PC-3 (cell line): ENCODE measurements at regions of chr18 and their contacts with region 1.

Region 1: GRCh38 chr18:26621161-26622026 is 73.0 kb upstream of the KCTD1 start:
- DNase-seq: peak; percentile 79
- ATAC-seq: peak; percentile 83
- H3K4me3 ChIP-seq: peak overlapping the region; percentile 67
- H3K27ac ChIP-seq: no peak overlapping the region
- H3K4me1 ChIP-seq: peaks cover 19% of the 10 kb centered on the region
- H3K27me3 ChIP-seq: no peaks in the 10 kb centered on the region
- CTCF ChIP-seq: peak; percentile 83

Region 2: GRCh38 chr18:26405190-26405801 is 216.1 kb before region 1 on chr18:
- CTCF ChIA-PET with region 1: interaction called, 12 read pairs
- POLR2A ChIA-PET with region 1: no interaction called
- intact Hi-C with region 1: loop called (anchors 10 kb)
- DNase-seq: peak; percentile 62
- ATAC-seq: peak; percentile 96
- H3K4me3 ChIP-seq: no peak overlapping the region
- H3K27ac ChIP-seq: no peak overlapping the region
- H3K4me1 ChIP-seq: no peaks in the 10 kb centered on the region
- H3K27me3 ChIP-seq: no peaks in the 10 kb centered on the region
- CTCF ChIP-seq: peak; percentile 77

Region 3: GRCh38 chr18:26574958-26575864 is 46.2 kb before region 1 on chr18:
- CTCF ChIA-PET with region 1: interaction called, 6 read pairs
- POLR2A ChIA-PET with region 1: no interaction called
- intact Hi-C with region 1: loop called (anchors 2 kb)
- DNase-seq: peak; percentile 56
- ATAC-seq: peak; percentile 40
- H3K4me3 ChIP-seq: peak overlapping the region; percentile 63
- H3K27ac ChIP-seq: peak overlapping the region; percentile 73
- H3K4me1 ChIP-seq: peaks cover 27% of the 10 kb centered on the region
- H3K27me3 ChIP-seq: no peaks in the 10 kb centered on the region
- CTCF ChIP-seq: no peak

Region 4: GRCh38 chr18:26771524-26771923 is 150.1 kb after region 1 on chr18:
- CTCF ChIA-PET with region 1: interaction called, 4 read pairs
- POLR2A ChIA-PET with region 1: no interaction called
- intact Hi-C with region 1: loop called (anchors 1 kb)
- DNase-seq: peak; percentile 34
- ATAC-seq: no peak
- H3K4me3 ChIP-seq: no peak overlapping the region
- H3K27ac ChIP-seq: no peak overlapping the region
- H3K4me1 ChIP-seq: no peaks in the 10 kb centered on the region
- H3K27me3 ChIP-seq: no peaks in the 10 kb centered on the region
- CTCF ChIP-seq: peak; percentile 55

Region 5: GRCh38 chr18:26963292-26963691 is 341.9 kb after region 1 on chr18:
- CTCF ChIA-PET with region 1: interaction called, 12 read pairs
- POLR2A ChIA-PET with region 1: interaction called, 4 read pairs
- intact Hi-C with region 1: loop called (anchors 1 kb)
- DNase-seq: peak; percentile 37
- ATAC-seq: peak; percentile 75
- H3K4me3 ChIP-seq: no peak overlapping the region
- H3K27ac ChIP-seq: no peak overlapping the region
- H3K4me1 ChIP-seq: no peaks in the 10 kb centered on the region
- H3K27me3 ChIP-seq: peaks cover 11% of the 10 kb centered on the region; the same call in 1 of the 2 replicates
- CTCF ChIP-seq: peak; percentile 50